Natural killer cell (primary cell): ENCODE measurements at regions of chr19 and their contacts with region 1.

Region 1: GRCh38 chr19:46860125-46860845 is 512 bp upstream of the ARHGAP35 start:
- DNase-seq: peak; percentile 92 to 98
- ATAC-seq: peak; percentile 82 to 94 (median 82)
- H3K4me3 ChIP-seq: peak overlapping the region; percentile 83
- H3K4me3 Mint-ChIP-seq: peak overlapping the region; percentile 89
- H3K27ac ChIP-seq: peak overlapping the region; percentile 84
- H3K27ac Mint-ChIP-seq: peak overlapping the region; percentile 91 to 94
- H3K4me1 ChIP-seq: peaks cover 47% of the 10 kb centered on the region
- H3K4me1 Mint-ChIP-seq: peaks cover 12 to 19% of the 10 kb centered on the region in 2 donors
- H3K27me3 ChIP-seq: no peaks in the 10 kb centered on the region
- H3K27me3 Mint-ChIP-seq: no peaks in the 10 kb centered on the region
- CTCF ChIP-seq: no peak

Region 2: DNA sequence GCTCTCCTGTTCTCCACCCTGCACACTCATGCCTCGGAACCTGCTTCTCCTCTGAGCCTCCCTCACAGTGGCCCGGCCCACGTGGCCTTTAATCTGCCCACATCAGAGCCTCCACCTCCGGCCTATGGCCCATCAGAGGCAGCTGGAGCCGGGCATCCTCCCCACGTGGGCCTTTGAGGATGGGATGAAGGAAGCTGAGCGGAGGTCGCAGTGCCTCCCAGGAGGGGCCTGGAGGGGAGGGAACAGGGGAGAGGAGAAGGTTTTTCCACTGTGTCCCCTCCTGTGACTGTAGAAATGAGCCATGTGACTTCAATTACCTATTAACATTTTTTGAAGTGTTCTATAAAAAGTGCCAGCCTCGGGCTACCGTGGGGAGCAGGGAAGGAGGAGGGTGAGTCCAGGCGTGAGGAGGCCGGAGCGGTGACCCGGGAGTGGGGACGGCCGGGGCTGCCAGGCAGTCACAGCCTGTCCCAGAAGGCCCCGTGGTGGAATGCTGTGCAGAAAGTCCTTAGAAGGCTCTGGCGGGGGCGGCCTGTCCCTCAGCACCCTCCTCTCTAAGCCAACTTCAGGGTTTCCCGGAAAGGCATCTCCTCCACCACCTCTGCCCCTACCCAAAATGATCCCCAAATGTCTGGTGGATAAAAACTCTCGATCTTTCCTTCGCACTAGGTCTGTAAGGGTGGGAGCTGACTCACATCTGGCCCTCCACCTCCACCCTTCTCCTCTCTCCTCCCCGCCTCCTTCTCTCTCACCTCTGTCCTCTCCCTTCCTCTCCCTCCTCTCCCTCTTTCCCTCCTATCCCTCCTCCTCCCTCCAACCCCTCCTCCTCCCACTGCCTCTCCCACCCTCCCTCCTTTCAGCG is 47.1 kb before region 1 on chr19:
- intact Hi-C with region 1: no loop called
- DNase-seq: no peak
- ATAC-seq: no peak
- H3K4me3 ChIP-seq: no peak overlapping the region
- H3K4me3 Mint-ChIP-seq: no peak overlapping the region
- H3K27ac ChIP-seq: no peak overlapping the region
- H3K27ac Mint-ChIP-seq: no peak overlapping the region
- H3K4me1 ChIP-seq: no peaks in the 10 kb centered on the region
- H3K4me1 Mint-ChIP-seq: no peaks in the 10 kb centered on the region
- H3K27me3 ChIP-seq: no peaks in the 10 kb centered on the region
- H3K27me3 Mint-ChIP-seq: peaks cover 0 to 10% of the 10 kb centered on the region in 2 donors
- CTCF ChIP-seq: no peak

Region 3: GRCh38 chr19:46975925-46976782 is 115.9 kb after region 1 on chr19:
- intact Hi-C with region 1: loop called (anchors 5 kb)
- DNase-seq: no peak
- ATAC-seq: no peak
- H3K4me3 ChIP-seq: no peak overlapping the region
- H3K4me3 Mint-ChIP-seq: peak overlapping the region; percentile 33
- H3K27ac ChIP-seq: no peak overlapping the region
- H3K27ac Mint-ChIP-seq: peak overlapping the region; percentile 68 to 89
- H3K4me1 ChIP-seq: peaks cover 51% of the 10 kb centered on the region
- H3K4me1 Mint-ChIP-seq: peaks cover 48 to 50% of the 10 kb centered on the region in 2 donors
- H3K27me3 ChIP-seq: no peaks in the 10 kb centered on the region
- H3K27me3 Mint-ChIP-seq: no peaks in the 10 kb centered on the region
- CTCF ChIP-seq: no peak

Region 4: GRCh38 chr19:46990991-46991676 is 130.8 kb after region 1 on chr19:
- intact Hi-C with region 1: loop called (anchors 1 kb)
- DNase-seq: peak; percentile 40 to 82
- ATAC-seq: peak; percentile 57 to 76 (median 75)
- H3K4me3 ChIP-seq: no peak overlapping the region
- H3K4me3 Mint-ChIP-seq: no peak overlapping the region
- H3K27ac ChIP-seq: no peak overlapping the region
- H3K27ac Mint-ChIP-seq: no peak overlapping the region
- H3K4me1 ChIP-seq: peaks cover 14% of the 10 kb centered on the region
- H3K4me1 Mint-ChIP-seq: peaks cover 10 to 11% of the 10 kb centered on the region in 2 donors
- H3K27me3 ChIP-seq: no peaks in the 10 kb centered on the region
- H3K27me3 Mint-ChIP-seq: no peaks in the 10 kb centered on the region
- CTCF ChIP-seq: peak; percentile 75